ENCODE measurements at regions of chr7 and their contacts with region 1.

Region 1: GRCh38 chr7:136134503-136134902 is 157.3 kb upstream of the MTPN start:
- DNase-seq: no peak
- ATAC-seq: peak; percentile 47; the same call in 1 of the 2 replicates
- H3K4me3 Mint-ChIP-seq: no peak overlapping the region
- H3K27ac Mint-ChIP-seq: no peak overlapping the region
- H3K4me1 Mint-ChIP-seq: peaks cover 13% of the 10 kb centered on the region
- H3K27me3 Mint-ChIP-seq: no peaks in the 10 kb centered on the region
- CTCF ChIP-seq: no peak

Region 2: GRCh38 chr7:136114966-136115762 is 19.3 kb before region 1 on chr7:
- CTCF ChIA-PET with region 1: interaction called, 11 read pairs
- POLR2A ChIA-PET with region 1: interaction called, 3 read pairs
- DNase-seq: peak; percentile 83
- ATAC-seq: peak; percentile 99
- H3K4me3 Mint-ChIP-seq: no peak overlapping the region
- H3K27ac Mint-ChIP-seq: no peak overlapping the region
- H3K4me1 Mint-ChIP-seq: no peaks in the 10 kb centered on the region
- H3K27me3 Mint-ChIP-seq: peaks cover 8% of the 10 kb centered on the region; the same call in 1 of the 2 replicates
- CTCF ChIP-seq: peak; percentile 92

Measured in WTC11 (cell line).